ENCODE measurements at regions of chr1 and their contacts with region 1.

Region 1: DNA sequence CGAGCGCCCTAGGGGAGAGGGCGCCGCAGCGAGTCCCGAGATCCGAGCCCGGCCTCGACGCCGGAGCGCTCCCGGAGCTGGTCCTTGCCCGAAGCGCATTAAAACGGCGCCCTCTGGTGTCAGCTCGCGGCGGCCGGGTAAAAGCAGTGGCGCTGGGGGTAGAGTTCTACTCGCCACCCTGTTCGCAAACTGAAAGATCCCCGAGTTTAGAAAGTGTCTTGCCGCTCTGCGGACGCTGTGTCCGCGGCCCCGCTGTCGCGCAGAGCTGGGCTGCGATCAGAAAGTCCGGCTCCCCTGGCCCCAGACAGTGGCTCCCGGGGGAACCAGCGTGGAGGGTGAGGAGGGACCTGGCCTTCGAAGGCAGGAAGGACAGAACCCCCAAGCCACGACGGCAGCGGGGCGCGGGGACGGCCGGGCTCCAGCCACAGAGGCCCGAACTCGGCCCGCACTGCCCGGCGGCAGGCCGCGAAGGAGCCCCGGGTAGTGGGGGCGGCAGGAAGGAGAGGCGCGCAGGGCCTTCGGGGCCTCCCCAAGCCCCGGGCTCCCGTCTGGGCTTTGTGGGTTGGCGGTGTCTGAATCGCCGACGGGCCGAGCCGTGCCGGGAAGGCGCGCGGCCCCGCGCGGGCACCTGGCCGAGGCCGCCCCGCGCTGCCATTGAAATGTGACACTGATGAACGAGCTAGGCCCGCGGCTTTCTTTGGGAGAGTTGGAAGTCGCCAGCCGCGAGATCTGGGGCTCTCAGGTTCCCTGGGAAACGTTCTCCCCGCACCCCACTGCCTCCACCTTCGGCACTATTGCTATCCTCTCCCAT is 39.1 kb upstream of the NFIA start:
- DNase-seq: peak; percentile 64
- H3K4me3 Mint-ChIP-seq: peak overlapping the region; percentile 31
- H3K27ac Mint-ChIP-seq: no peak overlapping the region
- H3K4me1 Mint-ChIP-seq: peaks cover 12% of the 10 kb centered on the region
- H3K27me3 Mint-ChIP-seq: no peaks in the 10 kb centered on the region
- CTCF ChIP-seq: peak; percentile 77

Region 2: DNA sequence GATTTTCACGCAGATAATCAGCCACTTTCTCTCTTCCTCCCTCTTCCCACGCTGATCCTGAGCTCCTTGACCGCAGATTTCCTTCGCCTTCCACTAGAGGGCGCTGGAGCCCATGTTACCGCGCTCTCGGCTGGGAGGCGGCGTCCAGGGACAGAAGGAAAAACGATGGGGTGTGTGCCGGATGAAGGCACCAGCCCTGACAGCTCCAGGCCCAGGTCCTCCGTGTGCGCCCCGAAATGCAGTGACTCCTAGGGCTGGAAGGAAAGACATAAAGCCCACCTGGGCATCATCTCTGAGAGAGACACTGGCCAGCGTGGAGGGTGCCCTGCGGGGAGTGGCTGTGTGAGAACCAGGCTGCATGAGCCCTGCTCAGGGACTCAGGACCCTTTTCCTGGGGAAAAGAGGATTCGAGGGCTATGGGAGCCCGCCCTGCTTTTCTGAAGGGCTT is 1071.7 kb before region 1 on chr1:
- CTCF ChIA-PET with region 1: interaction called, 14 read pairs
- POLR2A ChIA-PET with region 1: interaction called, 3 read pairs
- intact Hi-C with region 1: no loop called
- DNase-seq: peak; percentile 71
- H3K4me3 Mint-ChIP-seq: no peak overlapping the region
- H3K27ac Mint-ChIP-seq: no peak overlapping the region
- H3K4me1 Mint-ChIP-seq: no peaks in the 10 kb centered on the region
- H3K27me3 Mint-ChIP-seq: peaks cover 55% of the 10 kb centered on the region
- CTCF ChIP-seq: peak; percentile 91

Region 3: DNA sequence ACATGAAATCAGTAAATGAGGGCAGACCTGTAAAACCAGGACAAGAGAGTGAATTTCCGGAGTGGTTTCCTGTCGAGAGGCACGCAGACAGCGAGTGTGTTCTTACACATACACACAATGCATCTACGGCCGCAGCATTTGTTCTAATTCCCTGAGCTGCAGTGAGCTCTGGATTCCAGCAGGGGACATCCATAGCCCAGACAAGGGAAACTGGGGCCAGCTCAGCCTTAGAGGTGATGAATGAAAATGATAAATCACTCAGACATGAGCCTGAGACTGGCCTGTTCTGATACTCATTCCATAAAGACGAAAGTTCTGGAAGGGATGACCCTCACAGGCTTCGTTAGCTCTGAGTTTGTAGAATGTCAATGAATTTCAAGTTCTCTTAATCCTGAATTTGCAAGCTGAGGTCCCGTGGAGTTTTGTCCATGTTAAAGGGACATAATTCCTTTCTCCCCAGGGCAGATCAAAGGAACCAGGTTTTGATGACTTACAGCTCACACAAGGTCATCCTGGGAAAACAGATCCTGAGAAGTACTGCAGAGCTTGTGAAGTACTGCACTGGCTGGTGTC is 761.8 kb before region 1 on chr1:
- CTCF ChIA-PET with region 1: interaction called, 12 read pairs
- POLR2A ChIA-PET with region 1: no interaction called
- intact Hi-C with region 1: loop called (anchors 2 kb)
- DNase-seq: peak; percentile 85
- H3K4me3 Mint-ChIP-seq: no peak overlapping the region
- H3K27ac Mint-ChIP-seq: no peak overlapping the region
- H3K4me1 Mint-ChIP-seq: peaks cover 17% of the 10 kb centered on the region
- H3K27me3 Mint-ChIP-seq: no peaks in the 10 kb centered on the region
- CTCF ChIP-seq: peak; percentile 94

Region 4: DNA sequence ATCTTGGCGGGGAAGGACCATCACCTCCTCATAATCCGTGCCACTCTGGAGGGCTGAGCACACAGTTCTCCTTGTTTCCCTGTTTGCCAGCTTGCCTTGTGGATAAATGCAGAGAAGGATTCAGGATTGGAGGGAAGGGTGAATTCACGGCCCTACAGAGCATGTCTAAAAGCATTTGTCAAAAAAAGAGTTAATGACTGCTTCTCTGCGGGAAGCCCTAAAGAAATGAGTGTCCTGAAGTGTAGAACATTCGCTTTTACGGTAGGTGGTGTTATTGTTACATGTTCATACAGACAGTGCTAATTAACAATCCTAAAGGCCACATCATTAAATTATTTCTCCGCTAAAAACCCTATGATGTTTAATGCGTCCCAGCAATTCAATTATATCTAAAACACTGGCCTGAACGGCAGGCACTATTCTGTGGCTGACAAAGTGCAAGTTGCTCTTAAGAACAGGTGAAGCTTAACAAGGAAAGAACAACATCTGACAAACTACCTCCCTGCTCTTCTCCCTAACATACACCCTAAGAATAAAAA is 73.2 kb before region 1 on chr1:
- CTCF ChIA-PET with region 1: interaction called, 53 read pairs
- POLR2A ChIA-PET with region 1: no interaction called
- intact Hi-C with region 1: loop called (anchors 2 kb)
- DNase-seq: peak; percentile 43
- H3K4me3 Mint-ChIP-seq: no peak overlapping the region
- H3K27ac Mint-ChIP-seq: no peak overlapping the region
- H3K4me1 Mint-ChIP-seq: peaks cover 18% of the 10 kb centered on the region
- H3K27me3 Mint-ChIP-seq: no peaks in the 10 kb centered on the region
- CTCF ChIP-seq: peak; percentile 46

Region 5: DNA sequence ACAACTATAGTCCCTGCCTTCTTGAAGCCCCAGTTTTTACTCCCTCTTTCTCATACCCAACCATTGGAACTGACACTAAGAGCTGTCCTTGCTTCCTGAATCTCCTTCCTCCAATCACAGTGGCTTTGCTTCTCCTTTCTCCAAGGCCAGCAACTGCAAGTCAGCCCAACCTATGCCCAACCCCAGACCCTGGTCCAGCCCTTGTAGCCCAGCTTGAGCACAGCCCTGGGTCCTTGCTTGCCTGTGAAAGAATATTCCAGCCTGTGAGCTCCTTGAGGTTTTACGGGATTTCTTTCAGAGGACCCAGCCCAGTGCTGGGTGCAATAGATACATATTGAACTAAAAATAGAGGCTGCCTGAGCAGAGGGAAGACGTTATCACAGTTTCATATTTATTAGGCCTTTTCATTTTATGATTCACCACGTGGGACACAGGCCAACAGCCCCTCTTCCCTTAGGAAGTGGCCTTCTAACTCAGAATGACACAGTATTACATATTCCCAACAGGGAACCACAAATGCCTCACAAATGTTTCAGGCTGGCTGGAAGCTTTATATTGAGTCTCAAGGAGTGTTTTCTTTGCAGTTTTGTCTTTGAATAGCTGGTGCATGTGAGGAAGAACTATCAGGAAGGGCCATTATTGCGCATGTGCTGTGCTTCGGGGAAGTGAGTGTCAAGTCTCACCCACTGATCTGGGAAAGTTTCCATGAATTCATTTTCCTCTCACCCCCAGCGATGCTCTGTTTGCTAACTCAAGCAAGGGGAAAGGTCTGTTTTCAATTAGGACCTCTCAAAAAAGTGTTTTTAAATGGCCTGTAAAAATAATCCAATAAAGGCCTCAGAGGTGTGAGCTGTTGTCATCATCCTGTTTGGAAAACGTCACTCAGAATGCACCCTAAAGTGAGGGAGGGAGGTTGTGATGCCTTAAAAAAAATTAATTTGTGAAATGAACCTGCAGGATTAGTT is 53.2 kb before region 1 on chr1:
- CTCF ChIA-PET with region 1: interaction called, 23 read pairs
- POLR2A ChIA-PET with region 1: no interaction called
- intact Hi-C with region 1: no loop called
- DNase-seq: peak; percentile 29
- H3K4me3 Mint-ChIP-seq: no peak overlapping the region
- H3K27ac Mint-ChIP-seq: no peak overlapping the region
- H3K4me1 Mint-ChIP-seq: no peaks in the 10 kb centered on the region
- H3K27me3 Mint-ChIP-seq: no peaks in the 10 kb centered on the region
- CTCF ChIP-seq: no peak

Region 6: GRCh38 chr1:61028136-61028535 is 15.1 kb before region 1 on chr1:
- CTCF ChIA-PET with region 1: interaction called, 15 read pairs
- POLR2A ChIA-PET with region 1: no interaction called
- intact Hi-C with region 1: no loop called
- DNase-seq: no peak
- H3K4me3 Mint-ChIP-seq: no peak overlapping the region
- H3K27ac Mint-ChIP-seq: no peak overlapping the region
- H3K4me1 Mint-ChIP-seq: no peaks in the 10 kb centered on the region
- H3K27me3 Mint-ChIP-seq: no peaks in the 10 kb centered on the region
- CTCF ChIP-seq: no peak

Region 7: GRCh38 chr1:61403679-61404596 is 360.7 kb after region 1 on chr1:
- CTCF ChIA-PET with region 1: no interaction called
- POLR2A ChIA-PET with region 1: no interaction called
- intact Hi-C with region 1: no loop called
- DNase-seq: no peak
- H3K4me3 Mint-ChIP-seq: no peak overlapping the region
- H3K27ac Mint-ChIP-seq: peak overlapping the region; percentile 31
- H3K4me1 Mint-ChIP-seq: no peaks in the 10 kb centered on the region
- H3K27me3 Mint-ChIP-seq: no peaks in the 10 kb centered on the region
- CTCF ChIP-seq: no peak